ENCODE measurements at regions of chr2 and their contacts with region 1.

Region 1: GRCh38 chr2:172162739-172163336 is 60.1 kb upstream of the DLX2 start:
- DNase-seq: no peak
- H3K4me3 ChIP-seq: no peak overlapping the region
- H3K27ac ChIP-seq: no peak overlapping the region
- H3K4me1 ChIP-seq: no peaks in the 10 kb centered on the region
- H3K27me3 ChIP-seq: no peaks in the 10 kb centered on the region
- CTCF ChIP-seq: no peak

Region 2: DNA sequence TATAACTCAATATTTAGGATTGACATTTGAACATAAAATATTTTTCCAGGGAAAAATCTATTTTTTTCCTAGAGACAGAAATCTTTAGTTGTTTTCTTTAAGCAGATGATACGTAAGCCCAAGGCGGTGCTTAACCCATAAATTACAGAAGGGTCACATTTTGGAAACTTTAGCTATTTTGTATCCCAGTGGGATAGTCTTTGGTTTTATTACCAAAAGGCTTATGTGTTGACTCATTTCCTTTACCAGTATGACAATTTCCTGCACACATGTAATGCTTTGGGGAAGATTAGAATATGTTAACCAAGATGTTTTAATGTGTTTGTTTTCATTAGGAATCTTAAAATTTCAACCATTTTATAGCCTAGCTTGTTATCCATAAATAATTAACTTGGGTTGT is 450.8 kb before region 1 on chr2:
- CTCF ChIA-PET with region 1: no interaction called
- POLR2A ChIA-PET with region 1: interaction called, 10 read pairs
- intact Hi-C with region 1: no loop called
- DNase-seq: no peak
- H3K4me3 ChIP-seq: no peak overlapping the region
- H3K27ac ChIP-seq: peak overlapping the region; percentile 2; the same call in 1 of the 2 replicates
- H3K4me1 ChIP-seq: no peaks in the 10 kb centered on the region; the same call in 1 of the 2 replicates
- H3K27me3 ChIP-seq: no peaks in the 10 kb centered on the region
- CTCF ChIP-seq: no peak

Region 3: DNA sequence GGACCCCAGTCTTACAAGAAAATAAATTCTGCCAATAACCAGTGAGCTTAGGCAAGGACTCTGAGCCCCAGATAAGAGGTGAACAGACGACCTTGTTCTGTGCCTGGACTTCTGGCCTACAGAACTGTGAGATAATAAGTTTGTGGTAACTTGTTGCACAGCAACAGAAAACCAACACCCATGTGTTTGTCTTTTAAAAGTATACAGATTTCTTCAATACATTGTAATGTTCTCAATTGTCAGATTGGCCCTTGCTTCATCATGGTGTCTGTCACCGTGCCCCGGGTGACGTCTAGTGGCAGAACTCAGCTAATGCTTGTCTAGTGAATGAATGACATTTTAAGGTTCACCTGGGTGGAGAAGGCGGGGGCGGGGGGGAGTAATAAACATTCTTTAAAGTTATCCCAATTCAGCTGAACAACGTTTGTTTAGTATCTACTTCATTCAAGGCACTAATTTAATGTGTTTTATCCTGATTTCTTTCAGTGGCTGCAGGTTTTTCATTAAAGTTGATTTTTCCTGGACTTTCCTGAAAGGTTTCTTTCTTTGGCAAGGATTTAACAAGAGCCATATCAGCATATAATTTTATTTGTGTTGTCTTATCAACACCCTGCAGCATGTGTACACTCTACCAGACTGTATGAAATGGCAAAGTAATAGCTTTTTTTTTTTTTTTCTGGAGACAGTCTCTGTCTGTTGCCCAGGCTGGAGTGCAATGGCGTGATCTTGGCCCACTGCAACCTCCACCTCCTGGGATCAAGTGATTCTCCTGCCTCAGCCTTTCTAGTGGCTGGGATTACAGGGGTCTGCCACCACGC is 63.6 kb after region 1 on chr2:
- CTCF ChIA-PET with region 1: no interaction called
- POLR2A ChIA-PET with region 1: no interaction called
- intact Hi-C with region 1: no loop called
- DNase-seq: peak; percentile 81 to 88
- H3K4me3 ChIP-seq: no peak overlapping the region
- H3K27ac ChIP-seq: no peak overlapping the region
- H3K4me1 ChIP-seq: peaks cover 60% of the 10 kb centered on the region
- H3K27me3 ChIP-seq: no peaks in the 10 kb centered on the region
- CTCF ChIP-seq: peak; percentile 82